ENCODE measurements at regions of chr6 and their contacts with region 1.

Region 1: DNA sequence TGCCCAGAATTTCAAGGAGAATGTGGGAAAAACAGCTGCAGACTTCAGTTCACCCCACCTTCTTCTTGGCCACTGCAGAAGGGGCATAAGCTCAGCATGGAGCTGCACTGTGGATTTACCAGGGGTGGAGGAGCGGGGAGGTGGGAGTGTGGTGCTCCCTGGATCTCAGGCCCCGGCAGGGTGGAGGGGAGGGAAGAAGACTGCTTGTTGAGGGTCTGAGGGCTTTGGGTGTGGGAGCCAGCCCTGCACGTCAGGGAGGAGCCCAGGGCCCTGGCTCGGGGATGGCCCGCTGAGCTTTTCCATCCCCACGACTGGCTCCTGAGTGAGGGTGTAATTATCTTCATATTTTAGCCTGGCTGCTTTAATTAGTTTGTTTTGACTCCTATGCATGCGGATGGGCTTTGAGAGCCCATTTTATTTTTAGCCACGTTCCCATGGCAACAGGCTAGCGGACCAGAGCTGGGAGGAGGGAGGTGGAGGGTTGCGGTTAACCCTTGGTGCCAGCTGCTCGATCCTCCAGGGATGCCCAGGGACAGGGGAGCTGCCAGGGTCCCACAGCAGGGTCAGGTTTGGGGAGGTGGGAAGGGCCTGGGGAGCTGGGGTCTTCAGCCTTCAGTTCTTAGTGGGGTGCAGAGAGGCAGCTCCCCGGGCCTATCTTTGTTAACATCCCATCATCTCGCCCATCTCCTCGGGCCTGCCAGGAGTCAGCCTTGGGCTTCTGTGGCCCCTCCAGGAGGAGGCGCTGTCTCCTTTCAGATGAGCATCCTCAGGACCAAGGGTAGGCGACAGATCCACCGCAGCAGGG is 68.2 kb downstream of the RAB44 start:
- DNase-seq: no peak
- H3K4me3 ChIP-seq: no peak overlapping the region
- H3K27me3 ChIP-seq: no peaks in the 10 kb centered on the region
- CTCF ChIP-seq: peak; percentile 97

Region 2: GRCh38 chr6:36780442-36781177 is 14.8 kb after region 1 on chr6:
- CTCF ChIA-PET with region 1: interaction called, 89 read pairs
- POLR2A ChIA-PET with region 1: no interaction called
- DNase-seq: no peak
- H3K4me3 ChIP-seq: no peak overlapping the region
- H3K27me3 ChIP-seq: peaks cover 13% of the 10 kb centered on the region
- CTCF ChIP-seq: no peak

Region 3: DNA sequence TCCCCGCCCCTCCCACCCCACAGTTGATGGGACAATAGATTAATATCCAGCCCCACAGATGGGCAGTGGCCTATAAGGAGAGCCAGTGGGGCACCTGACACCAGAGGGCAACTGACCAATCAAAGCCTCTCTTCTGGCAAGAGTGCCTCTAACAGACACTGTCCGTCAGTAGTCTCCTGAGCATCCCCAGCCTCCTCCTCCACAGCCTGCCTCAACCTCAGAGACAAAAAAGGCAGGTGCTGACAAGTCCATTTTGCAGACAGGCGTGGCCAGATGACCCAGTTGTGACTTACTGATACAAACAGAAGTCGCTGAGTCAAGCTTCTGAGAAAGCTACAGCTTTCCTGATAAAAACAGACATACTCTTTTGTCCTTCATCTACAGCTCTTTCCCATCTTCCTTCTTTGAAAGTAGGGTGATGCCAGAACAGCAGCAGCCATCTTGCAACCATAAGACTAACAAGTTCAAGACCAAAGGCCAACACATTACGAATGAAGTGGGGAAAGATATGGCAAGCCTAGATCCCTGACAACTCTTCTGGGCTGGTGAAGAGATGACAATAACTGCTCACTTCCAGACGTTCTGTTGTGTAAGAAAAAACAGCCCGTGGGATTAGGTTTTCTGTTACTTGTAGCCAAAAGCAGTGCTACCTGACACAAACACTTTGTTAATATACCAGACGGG is 96.5 kb after region 1 on chr6:
- CTCF ChIA-PET with region 1: interaction called, 10 read pairs
- POLR2A ChIA-PET with region 1: no interaction called
- DNase-seq: no peak
- H3K4me3 ChIP-seq: no peak overlapping the region
- H3K27me3 ChIP-seq: no peaks in the 10 kb centered on the region
- CTCF ChIP-seq: no peak

Region 4: DNA sequence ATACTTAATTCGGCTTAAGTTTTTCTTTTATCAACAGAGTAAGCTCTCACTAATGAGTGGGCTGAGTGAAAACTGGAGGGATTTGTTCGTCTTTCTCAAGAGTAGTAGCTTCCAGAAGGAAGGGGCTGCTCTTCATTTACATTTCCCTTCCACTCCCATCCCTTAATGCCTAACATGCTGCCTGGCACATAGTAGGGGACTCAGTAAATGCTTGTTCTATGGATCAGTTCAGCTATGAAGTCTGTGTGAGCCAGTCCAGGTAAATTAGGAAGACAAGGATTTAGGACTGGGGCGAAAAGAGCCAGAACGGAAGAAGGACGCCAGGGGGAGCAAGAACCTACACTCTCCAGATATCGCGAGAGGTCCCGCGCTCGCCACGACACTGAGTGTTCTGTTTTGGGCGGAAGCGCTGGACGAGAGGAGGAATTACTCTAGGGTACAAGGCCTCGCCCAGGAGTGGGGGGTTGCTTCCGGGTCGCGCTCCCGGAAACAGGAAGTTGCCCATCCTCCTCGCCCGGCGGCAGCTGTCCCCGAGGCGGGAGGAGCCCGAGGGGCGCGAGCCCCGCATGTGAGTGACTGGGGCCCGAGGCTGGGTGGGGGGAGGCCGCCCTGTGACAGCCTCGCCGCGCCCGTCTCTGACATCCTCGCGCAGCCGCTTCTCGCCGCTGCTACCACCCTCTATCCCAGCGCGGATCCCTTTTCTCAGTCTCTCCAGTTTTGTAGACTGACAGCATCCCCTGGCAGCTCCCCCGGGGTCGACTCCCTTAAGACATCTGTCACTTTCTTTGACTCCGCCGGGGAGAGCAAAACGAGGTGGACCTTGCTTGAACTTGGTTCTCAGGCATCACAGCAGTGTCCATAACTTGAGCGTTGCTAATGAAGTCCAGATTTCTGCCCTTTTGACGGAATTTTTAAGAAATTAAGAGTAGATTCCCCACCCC is 119.9 kb after region 1 on chr6 and contains the start of gene C6orf89:
- CTCF ChIA-PET with region 1: interaction called, 47 read pairs
- POLR2A ChIA-PET with region 1: no interaction called
- DNase-seq: peak; percentile 75
- H3K4me3 ChIP-seq: peak within 1 kb of the TSS; percentile 68
- H3K27me3 ChIP-seq: no peaks in the 10 kb centered on the region
- CTCF ChIP-seq: peak; percentile 86
- polyA plus RNA-seq, gene C6orf89: 66.0 and 71.4 TPM in 2 replicates

Region 5: GRCh38 chr6:36979347-36979742 is 213.5 kb after region 1 on chr6:
- CTCF ChIA-PET with region 1: interaction called, 15 read pairs
- POLR2A ChIA-PET with region 1: no interaction called
- DNase-seq: no peak
- H3K4me3 ChIP-seq: no peak overlapping the region
- H3K27me3 ChIP-seq: no peaks in the 10 kb centered on the region
- CTCF ChIP-seq: peak; percentile 90

Region 6: GRCh38 chr6:37207903-37208456 is 442.2 kb after region 1 on chr6:
- CTCF ChIA-PET with region 1: interaction called, 17 read pairs
- POLR2A ChIA-PET with region 1: no interaction called
- DNase-seq: no peak
- H3K4me3 ChIP-seq: no peak overlapping the region
- H3K27me3 ChIP-seq: no peaks in the 10 kb centered on the region; the same call in 1 of the 2 replicates
- CTCF ChIP-seq: peak; percentile 89